GM12878 (cell line): ENCODE measurements at regions of chr19 and their contacts with region 1.

Region 1: DNA sequence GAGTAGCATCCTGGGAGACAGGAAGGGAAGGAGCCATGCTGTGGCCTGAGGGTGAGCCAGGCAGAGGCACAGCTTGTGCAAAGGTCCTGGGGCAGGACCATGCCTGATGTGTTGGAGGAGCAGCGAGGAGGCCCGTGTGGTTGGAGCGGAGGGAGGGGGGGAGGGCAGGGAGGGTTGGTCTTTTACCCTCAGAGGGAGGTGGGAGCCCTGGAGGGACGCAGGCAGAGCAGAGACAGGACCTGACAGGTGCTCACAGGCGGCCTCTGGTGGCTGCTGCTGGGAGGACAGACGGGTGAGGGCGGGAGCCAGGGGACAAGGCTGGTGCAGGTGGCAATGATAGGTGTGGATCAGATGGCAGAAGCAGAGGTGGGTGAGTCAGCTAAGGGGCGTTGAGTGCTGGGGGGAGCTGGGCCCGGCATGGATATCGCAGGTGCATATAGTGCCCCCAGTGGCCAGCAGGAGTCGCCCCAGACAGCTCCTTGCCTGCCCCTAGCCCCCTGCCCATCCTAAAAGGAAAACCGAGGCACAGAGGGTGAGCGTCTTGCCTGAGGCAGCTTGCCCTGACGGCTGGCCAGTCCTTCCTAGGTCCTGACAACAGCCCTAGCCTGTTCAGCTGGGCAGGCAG is 9.8 kb upstream of the GNA15 start:
- DNase-seq: no peak
- ATAC-seq: peak; percentile 91
- H3K4me3 ChIP-seq: no peak overlapping the region
- H3K27ac ChIP-seq: no peak overlapping the region
- H3K4me1 ChIP-seq: peaks cover 17% of the 10 kb centered on the region
- H3K27me3 ChIP-seq: no peaks in the 10 kb centered on the region
- CTCF ChIP-seq: peak; percentile 62 to 92 (median 84)
- EP300 ChIP-seq: no peak
- POLR2A ChIP-seq: no peak
- RAD21 ChIP-seq: peak; percentile 39

Region 2: GRCh38 chr19:3062168-3063102 is 63.6 kb before region 1 on chr19 and contains the start of gene TLE5:
- CTCF ChIA-PET with region 1: no interaction called
- POLR2A ChIA-PET with region 1: no interaction called
- RAD21 ChIA-PET with region 1: no interaction called
- SMC1A ChIA-PET with region 1: no interaction called
- in situ Hi-C with region 1: no loop called
- intact Hi-C with region 1: no loop called
- DNase-seq: no peak
- ATAC-seq: peak; percentile 32
- H3K4me3 ChIP-seq: peak within 1 kb of the TSS; percentile 88
- H3K27ac ChIP-seq: peak within 1 kb of the TSS; percentile 87
- H3K4me1 ChIP-seq: peaks cover 36% of the 10 kb centered on the region
- H3K27me3 ChIP-seq: no peaks in the 10 kb centered on the region
- CTCF ChIP-seq: no peak
- EP300 ChIP-seq: no peak
- POLR2A ChIP-seq: peak; percentile 78
- RAD21 ChIP-seq: no peak
- polyA plus RNA-seq, gene TLE5: 2.5 to 13.0 TPM

Region 3: GRCh38 chr19:3100081-3100864 is 25.7 kb before region 1 on chr19:
- CTCF ChIA-PET with region 1: interaction called, 19 read pairs
- POLR2A ChIA-PET with region 1: no interaction called
- RAD21 ChIA-PET with region 1: interaction called, 5 read pairs
- SMC1A ChIA-PET with region 1: interaction called, 3 read pairs
- in situ Hi-C with region 1: no loop called
- intact Hi-C with region 1: no loop called
- DNase-seq: no peak
- ATAC-seq: no peak
- H3K4me3 ChIP-seq: no peak overlapping the region
- H3K27ac ChIP-seq: no peak overlapping the region
- H3K4me1 ChIP-seq: peaks cover 11% of the 10 kb centered on the region
- H3K27me3 ChIP-seq: no peaks in the 10 kb centered on the region; a peak in 2 of 4 replicates
- CTCF ChIP-seq: no peak
- EP300 ChIP-seq: no peak
- POLR2A ChIP-seq: no peak
- RAD21 ChIP-seq: no peak

Region 4: GRCh38 chr19:3146677-3147100 is 20.7 kb after region 1 on chr19:
- CTCF ChIA-PET with region 1: interaction called, 117 read pairs
- POLR2A ChIA-PET with region 1: interaction called, 14 read pairs
- RAD21 ChIA-PET with region 1: interaction called, 6 read pairs
- SMC1A ChIA-PET with region 1: interaction called, 14 read pairs
- in situ Hi-C with region 1: no loop called
- intact Hi-C with region 1: no loop called
- DNase-seq: no peak
- ATAC-seq: peak; percentile 80
- H3K4me3 ChIP-seq: no peak overlapping the region
- H3K27ac ChIP-seq: no peak overlapping the region
- H3K4me1 ChIP-seq: peaks cover 15% of the 10 kb centered on the region
- H3K27me3 ChIP-seq: no peaks in the 10 kb centered on the region
- CTCF ChIP-seq: peak; percentile 60 to 97 (median 79)
- EP300 ChIP-seq: no peak
- POLR2A ChIP-seq: no peak
- RAD21 ChIP-seq: peak; percentile 44